Tibial artery (tissue), 4 donors: ENCODE measurements at regions of chr9 and their contacts with region 1.

Region 1: GRCh38 chr9:77177161-77177893 is at the start of gene VPS13A:
- DNase-seq: peak; percentile 91 to 97
- H3K4me3 ChIP-seq: peak within 1 kb of the TSS; percentile 61 to 78
- H3K27ac ChIP-seq: peak within 1 kb of the TSS; percentile 74 to 90
- H3K4me1 ChIP-seq: peaks cover 0 to 41% (median 7%) of the 10 kb centered on the region in 4 donors
- H3K27me3 ChIP-seq: no peaks in the 10 kb centered on the region
- CTCF ChIP-seq: peak in 1 of 2 experiments; percentile 30

Region 2: DNA sequence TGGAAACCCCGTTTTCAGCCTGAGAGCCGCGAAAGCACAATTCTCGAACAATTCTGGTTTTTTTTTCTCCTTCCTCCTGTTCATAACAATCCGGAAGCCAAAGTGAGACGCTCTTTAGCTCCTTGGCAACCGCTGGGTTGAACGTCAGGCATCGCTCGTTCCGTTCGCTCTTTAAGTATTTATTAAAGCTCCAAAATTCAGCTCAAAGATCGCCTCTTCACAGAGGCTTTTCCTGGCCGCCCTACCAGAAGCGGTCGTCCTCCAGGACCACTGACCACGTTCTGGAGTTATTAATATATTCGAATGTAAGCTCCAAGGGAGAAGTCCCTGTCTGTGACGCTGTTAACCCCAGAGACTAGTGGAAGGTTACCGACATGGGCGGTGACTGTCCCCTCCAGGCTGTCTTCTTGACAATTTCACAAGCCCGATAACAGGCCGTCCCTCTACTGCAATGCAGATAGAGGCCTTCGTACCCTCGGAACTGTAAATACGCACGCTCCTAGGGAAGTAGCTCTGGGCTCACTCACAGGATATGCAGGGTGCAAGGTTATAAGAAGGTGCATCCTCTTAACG is 782.6 kb before region 1 on chr9:
- intact Hi-C with region 1: loop called (anchors 5 kb)
- DNase-seq: peak in 1 of 2 donors; percentile 58
- H3K4me3 ChIP-seq: peak overlapping the region; percentile 77 to 80
- H3K27ac ChIP-seq: peak overlapping the region; percentile 80 to 93
- H3K4me1 ChIP-seq: peaks cover 0 to 17% (median 3%) of the 10 kb centered on the region in 4 donors
- H3K27me3 ChIP-seq: no peaks in the 10 kb centered on the region
- CTCF ChIP-seq: no peak